Sigmoid colon (tissue), 7 donors: ENCODE measurements at regions of chr21 and their contacts with region 1.

Region 1: DNA sequence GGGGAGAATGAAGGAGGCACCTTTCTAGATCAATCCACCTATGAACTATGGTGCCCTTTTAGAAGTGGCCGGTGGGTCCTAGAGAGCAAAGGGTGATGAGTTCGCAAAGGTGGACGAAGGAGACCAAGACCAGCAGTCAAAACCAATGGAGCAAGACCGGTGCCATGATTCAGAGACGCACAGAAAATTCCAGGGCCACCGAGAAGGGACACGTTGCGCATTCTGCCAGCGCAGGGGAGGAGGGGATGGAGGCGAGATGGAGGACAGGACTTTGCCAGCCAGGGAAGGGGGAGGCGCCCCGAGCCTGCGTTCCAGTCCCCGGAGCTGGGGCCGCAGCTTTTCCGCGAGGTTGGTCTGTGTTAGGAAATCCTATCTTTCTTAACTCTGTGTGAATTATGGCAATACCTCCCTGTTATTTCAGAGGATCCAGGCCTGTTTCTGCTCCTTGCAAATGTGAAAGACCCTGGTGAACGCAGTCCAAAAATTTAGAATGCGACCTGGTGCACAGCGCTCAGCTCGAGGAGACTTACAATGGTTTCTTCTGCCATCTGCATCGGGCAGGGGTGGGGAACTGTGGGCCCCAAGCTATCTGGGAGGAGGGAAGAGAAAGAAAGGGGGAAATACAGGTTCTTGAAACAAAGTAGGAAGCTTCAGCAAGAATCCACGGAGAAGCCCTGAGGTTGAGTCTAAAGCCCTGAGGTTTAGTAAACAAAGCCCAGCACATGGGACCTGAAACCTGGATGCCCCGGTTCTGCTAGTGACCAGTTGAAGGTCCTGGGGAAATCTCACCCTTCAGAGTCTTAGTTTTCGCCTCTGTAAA is 129.4 kb downstream of the MRPS6 start:
- DNase-seq: peak; percentile 84
- H3K4me3 ChIP-seq: peak overlapping the region in 3 of 4 donors; percentile 46 to 54 (median 49)
- H3K27ac ChIP-seq: peak overlapping the region; percentile 71 to 87 (median 84)
- H3K4me1 ChIP-seq: peaks cover 0 to 74% (median 67%) of the 10 kb centered on the region in 4 donors
- H3K27me3 ChIP-seq: no peaks in the 10 kb centered on the region
- CTCF ChIP-seq: no peak
- EP300 ChIP-seq: no peak
- POLR2A ChIP-seq: no peak

Region 2: GRCh38 chr21:33937931-33938339 is 264.8 kb before region 1 on chr21:
- intact Hi-C with region 1: loop called (anchors 2 kb)
- DNase-seq: no peak
- H3K4me3 ChIP-seq: no peak overlapping the region
- H3K27ac ChIP-seq: peak overlapping the region in 3 of 4 donors; percentile 21 to 84 (median 34)
- H3K4me1 ChIP-seq: peaks cover 0 to 41% (median 38%) of the 10 kb centered on the region in 4 donors
- H3K27me3 ChIP-seq: no peaks in the 10 kb centered on the region
- CTCF ChIP-seq: no peak
- EP300 ChIP-seq: no peak
- POLR2A ChIP-seq: no peak

Region 3: DNA sequence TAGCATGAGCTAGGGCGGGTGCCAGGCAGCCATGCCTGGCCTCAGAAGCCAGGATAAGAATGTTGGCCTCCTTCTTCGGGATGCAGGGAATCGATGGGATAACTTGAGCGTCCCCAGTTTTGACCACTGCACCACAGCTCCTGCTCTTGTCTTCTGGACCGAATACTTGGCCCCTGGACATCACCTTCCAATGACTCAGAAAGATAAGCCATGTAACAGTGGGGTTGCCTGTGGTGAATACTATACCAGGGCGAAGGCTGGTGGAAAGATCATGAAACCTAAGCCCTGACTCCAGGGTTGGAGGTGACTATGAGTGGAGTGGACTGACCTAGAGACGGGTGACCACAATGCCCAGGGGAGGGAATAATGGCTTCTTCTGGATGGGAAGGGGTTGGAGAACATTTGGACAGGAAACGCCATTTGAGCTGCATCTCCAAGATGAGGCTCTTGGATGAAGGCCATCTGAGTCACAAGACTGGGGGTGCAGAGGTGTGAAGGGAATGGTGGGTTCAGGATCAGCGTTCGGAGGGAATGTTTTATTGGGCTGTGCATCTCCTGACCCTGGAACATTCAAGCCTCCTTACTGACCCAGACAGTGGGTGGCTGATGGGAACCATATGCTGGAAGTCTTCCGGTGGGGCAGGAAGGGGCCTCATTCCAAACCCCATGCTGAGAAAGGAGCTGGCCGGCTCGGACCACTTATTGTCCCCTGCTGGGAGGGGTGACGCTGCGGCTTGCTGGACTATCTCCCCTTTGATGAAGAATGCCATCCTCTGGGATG is 142.5 kb after region 1 on chr21:
- intact Hi-C with region 1: loop called (anchors 2 kb)
- DNase-seq: no peak
- H3K4me3 ChIP-seq: no peak overlapping the region
- H3K27ac ChIP-seq: peak overlapping the region; percentile 53 to 78 (median 60)
- H3K4me1 ChIP-seq: peaks cover 0 to 57% (median 42%) of the 10 kb centered on the region in 4 donors
- H3K27me3 ChIP-seq: no peaks in the 10 kb centered on the region
- CTCF ChIP-seq: no peak
- EP300 ChIP-seq: no peak
- POLR2A ChIP-seq: no peak